B cell (primary cell): ENCODE measurements at regions of chr1 and their contacts with region 1.

Region 1: DNA sequence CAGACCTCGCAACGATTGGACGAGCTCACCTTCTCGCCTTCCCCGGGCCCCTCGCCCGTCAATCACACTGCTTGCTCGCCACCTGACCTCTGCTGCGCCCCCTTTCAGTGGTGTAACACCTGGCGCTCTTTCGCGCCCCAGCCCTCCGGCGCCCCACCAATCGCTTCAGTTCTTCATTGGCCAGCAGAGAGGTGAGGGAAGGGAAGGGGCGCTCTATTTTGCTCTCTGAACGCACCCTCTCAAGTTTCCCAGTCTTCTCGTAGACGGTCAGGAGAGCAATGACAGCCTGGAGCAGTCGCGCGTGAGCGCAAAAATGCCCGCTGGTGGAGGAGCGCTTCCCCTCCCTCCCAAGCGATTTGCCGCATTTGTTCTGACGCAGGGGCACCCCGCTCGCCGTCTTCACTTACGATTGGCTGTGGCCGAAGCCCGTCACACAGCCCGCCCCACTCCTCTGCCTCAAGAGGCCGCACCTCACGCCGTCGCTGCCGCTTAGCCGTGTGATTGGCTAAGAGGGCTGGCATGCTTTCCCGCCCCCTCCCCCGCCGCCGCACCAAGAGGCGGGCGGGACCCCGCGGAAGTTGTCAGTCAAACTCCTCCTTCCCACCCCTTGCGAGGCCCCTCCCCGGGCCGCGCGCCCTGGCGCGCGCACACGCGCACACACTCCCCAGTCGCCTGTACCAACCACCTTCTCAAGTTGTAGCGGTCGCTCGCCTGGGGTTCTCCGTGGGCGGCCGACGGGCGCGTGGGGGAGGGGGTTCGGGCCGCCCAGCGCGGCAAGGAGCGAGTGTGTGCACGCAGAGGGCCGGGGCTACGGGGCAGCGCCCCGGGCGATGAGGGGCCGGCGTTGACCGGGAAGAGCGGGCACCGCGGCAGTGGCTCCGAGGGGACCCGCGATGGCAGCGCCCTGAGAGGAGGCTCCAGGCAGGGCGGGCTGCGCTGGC is at the start of gene PPP2R5A:
- DNase-seq: peak; percentile 100
- ATAC-seq: peak; percentile 85
- H3K4me3 ChIP-seq: peak within 1 kb of the TSS; percentile 75 to 97 (median 92)
- H3K4me3 Mint-ChIP-seq: peak within 1 kb of the TSS; percentile 93
- H3K27ac ChIP-seq: peak within 1 kb of the TSS; percentile 89 to 90
- H3K27ac Mint-ChIP-seq: peak within 1 kb of the TSS; percentile 96
- H3K4me1 ChIP-seq: peaks cover 22 to 28% of the 10 kb centered on the region in 2 donors
- H3K4me1 Mint-ChIP-seq: peaks cover 41% of the 10 kb centered on the region
- H3K27me3 ChIP-seq: no peaks in the 10 kb centered on the region
- H3K27me3 Mint-ChIP-seq: no peaks in the 10 kb centered on the region
- CTCF ChIP-seq: peak; percentile 62
- total RNA-seq, gene PPP2R5A: 41.1 and 43.4 TPM in 2 replicates

Region 2: DNA sequence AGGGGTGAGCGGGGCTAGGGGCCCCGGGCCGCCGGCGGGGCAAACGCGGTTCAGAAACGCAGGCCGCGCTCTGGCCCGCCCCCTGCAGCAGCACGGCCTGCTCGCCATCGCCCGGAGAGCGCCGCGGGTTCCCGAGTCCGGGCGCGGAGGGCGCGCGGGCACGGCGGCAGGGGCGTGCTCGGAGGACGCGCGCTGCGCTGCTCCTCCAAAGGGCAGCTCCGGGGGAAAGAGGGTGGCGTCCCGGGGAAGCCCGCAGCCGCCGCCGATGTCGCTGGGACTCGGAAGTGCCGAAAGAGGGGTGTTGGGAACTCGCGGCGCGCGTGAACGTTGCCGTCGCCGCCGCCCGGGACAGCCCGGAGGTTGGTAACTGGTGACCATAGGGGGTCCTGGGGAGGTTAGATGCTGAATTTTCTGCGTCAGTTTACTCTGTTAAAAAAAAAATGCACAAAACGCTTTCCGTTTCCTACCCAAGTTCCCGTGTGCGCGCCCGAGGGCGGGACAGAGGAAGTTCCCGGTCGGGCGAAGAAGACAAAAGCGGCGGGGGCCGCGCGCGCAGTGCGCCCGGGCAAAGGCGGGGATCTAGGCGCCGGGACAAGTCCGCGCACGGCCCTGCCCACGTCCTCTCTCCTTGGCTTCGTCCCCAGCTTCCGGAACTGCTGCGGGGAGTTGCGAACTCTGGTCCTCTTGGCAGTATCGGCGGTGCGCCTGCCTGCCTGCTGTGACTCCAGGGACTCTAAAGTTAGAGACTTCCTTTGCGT is 1956.1 kb before region 1 on chr1 and contains the start of gene HHAT:
- CTCF ChIA-PET with region 1: no interaction called
- POLR2A ChIA-PET with region 1: no interaction called
- intact Hi-C with region 1: loop called (anchors 2 kb)
- DNase-seq: peak; percentile 75
- ATAC-seq: peak; percentile 70
- H3K4me3 ChIP-seq: peak within 1 kb of the TSS; percentile 52 to 89 (median 87)
- H3K4me3 Mint-ChIP-seq: peak within 1 kb of the TSS; percentile 94
- H3K27ac ChIP-seq: peak within 1 kb of the TSS; percentile 54 to 64
- H3K27ac Mint-ChIP-seq: peak within 1 kb of the TSS; percentile 90
- H3K4me1 ChIP-seq: peaks cover 16 to 25% of the 10 kb centered on the region in 2 donors
- H3K4me1 Mint-ChIP-seq: peaks cover 39% of the 10 kb centered on the region
- H3K27me3 ChIP-seq: peaks cover 0 to 2% (median 0%) of the 10 kb centered on the region in 4 experiments
- H3K27me3 Mint-ChIP-seq: peaks cover 12% of the 10 kb centered on the region
- CTCF ChIP-seq: no peak
- total RNA-seq, gene HHAT: 26.7 and 28.2 TPM in 2 replicates

Region 3: DNA sequence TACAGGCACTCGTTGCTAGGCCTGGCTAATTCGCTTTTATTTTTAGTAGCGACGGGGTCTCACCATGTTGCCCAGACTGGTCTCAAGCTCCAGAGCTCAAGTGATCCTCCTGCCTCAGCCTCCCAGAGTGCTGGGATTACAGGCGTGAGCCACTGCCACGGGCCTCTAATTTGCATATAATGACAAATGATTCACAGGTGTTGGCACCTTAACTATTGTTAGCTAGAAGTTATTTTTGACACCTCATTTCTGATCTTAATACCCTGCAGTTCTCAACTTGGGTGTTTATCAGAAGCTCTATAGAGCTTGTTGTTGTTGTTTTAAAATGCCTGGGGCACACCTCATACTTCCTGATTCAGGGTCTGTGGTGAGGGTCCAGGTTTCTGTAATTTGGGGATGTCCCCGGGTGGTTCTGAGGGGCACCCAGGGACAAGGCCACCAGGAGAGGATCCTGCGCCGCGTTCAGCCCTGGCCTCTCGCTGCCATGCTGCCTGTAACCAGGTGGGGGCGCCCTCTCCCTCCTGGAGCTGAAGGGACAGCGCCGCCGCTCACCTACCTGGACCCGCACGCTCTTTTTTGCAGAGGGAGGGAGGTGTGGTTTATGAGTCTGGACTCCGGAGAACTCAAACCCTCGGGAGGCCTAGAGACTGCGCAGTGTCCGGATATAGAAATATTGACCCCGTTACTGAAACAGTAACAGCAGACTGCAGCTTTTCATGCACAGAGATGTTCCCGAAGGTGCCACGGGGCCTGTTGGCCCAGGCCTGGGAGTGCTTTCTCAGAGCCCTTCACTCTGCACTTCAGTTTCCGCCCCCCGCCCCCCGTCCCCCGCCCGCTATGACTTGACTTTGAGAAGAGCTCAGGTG is 586.6 kb before region 1 on chr1:
- CTCF ChIA-PET with region 1: interaction called, 8 read pairs
- POLR2A ChIA-PET with region 1: no interaction called
- intact Hi-C with region 1: loop called (anchors 5 kb)
- DNase-seq: peak; percentile 76
- ATAC-seq: peak; percentile 45
- H3K4me3 ChIP-seq: peak overlapping the region in 3 of 5 experiments; percentile 21 to 44 (median 34)
- H3K4me3 Mint-ChIP-seq: peak overlapping the region; percentile 76
- H3K27ac ChIP-seq: peak overlapping the region in 1 of 2 donors; percentile 11
- H3K27ac Mint-ChIP-seq: peak overlapping the region; percentile 59
- H3K4me1 ChIP-seq: peaks cover 44 to 52% of the 10 kb centered on the region in 2 donors
- H3K4me1 Mint-ChIP-seq: peaks cover 53% of the 10 kb centered on the region
- H3K27me3 ChIP-seq: peaks cover 0 to 5% (median 0%) of the 10 kb centered on the region in 4 experiments
- H3K27me3 Mint-ChIP-seq: peaks cover 5% of the 10 kb centered on the region
- CTCF ChIP-seq: peak; percentile 97

Region 4: DNA sequence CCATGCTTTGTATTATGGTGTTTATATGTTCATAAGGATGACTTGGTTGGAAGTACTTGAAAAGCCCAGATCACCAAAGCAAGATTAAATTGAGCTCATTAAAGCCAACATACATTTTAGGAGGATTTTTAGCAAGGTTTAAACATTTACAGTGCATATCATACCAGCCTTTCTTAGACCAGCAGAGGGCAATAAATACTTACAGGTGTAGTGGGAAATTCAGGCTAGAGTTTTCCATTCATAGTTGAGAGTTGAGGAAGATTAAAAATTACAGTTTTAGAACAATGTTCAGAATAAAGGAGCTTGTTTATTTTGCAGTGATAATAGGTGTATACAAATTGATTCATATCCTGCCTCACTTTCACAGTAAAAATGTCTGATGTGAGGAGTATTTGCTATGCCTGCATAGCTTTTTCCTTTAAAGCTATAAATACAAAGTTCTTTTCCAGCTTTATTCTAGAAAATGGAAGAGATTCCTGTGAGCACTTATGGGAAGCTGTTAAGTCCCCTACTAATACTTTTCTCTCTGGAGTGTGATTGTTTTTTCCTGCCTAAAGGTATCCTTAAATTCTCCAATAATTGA is 214.2 kb before region 1 on chr1:
- CTCF ChIA-PET with region 1: interaction called, 101 read pairs
- POLR2A ChIA-PET with region 1: no interaction called
- intact Hi-C with region 1: no loop called
- DNase-seq: peak; percentile 64
- ATAC-seq: no peak
- H3K4me3 ChIP-seq: no peak overlapping the region
- H3K4me3 Mint-ChIP-seq: no peak overlapping the region
- H3K27ac ChIP-seq: no peak overlapping the region
- H3K27ac Mint-ChIP-seq: no peak overlapping the region
- H3K4me1 ChIP-seq: no peaks in the 10 kb centered on the region
- H3K4me1 Mint-ChIP-seq: no peaks in the 10 kb centered on the region
- H3K27me3 ChIP-seq: no peaks in the 10 kb centered on the region
- H3K27me3 Mint-ChIP-seq: no peaks in the 10 kb centered on the region
- CTCF ChIP-seq: peak; percentile 63

Region 5: DNA sequence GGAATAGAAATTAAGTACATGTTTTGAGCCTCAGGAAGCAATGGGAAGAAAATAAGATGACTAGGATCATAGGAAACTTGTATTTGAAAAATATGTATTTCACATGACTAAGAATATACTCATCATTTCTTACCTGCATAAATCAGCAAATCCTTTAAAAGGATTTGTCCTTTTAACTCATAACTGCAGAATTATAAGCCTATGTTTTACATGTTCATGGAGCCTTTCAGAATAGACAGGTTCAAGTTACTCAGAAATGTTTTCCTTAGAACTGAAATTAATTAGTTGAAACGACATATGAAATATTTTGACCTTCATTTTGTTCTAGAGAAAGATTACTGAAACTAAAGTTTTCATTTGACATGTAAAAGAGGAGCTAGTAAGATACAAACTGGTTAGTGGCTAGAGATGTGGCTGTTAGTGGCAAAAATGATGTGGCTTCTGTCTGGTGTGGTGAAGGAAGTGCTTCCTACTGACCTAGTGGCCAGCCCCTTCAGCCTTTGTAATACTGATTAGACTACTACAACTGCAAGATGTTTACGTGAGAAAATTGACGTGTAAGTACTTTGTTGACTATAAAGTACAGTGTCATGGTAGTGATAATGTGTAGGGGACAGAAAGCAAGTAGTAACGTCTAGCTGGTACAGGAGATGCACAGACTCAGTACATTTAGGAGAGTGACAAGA is 74.9 kb after region 1 on chr1:
- CTCF ChIA-PET with region 1: no interaction called
- POLR2A ChIA-PET with region 1: no interaction called
- intact Hi-C with region 1: no loop called
- DNase-seq: no peak
- ATAC-seq: no peak
- H3K4me3 ChIP-seq: no peak overlapping the region
- H3K4me3 Mint-ChIP-seq: no peak overlapping the region
- H3K27ac ChIP-seq: no peak overlapping the region
- H3K27ac Mint-ChIP-seq: peak overlapping the region; percentile 21
- H3K4me1 ChIP-seq: no peaks in the 10 kb centered on the region
- H3K4me1 Mint-ChIP-seq: no peaks in the 10 kb centered on the region
- H3K27me3 ChIP-seq: no peaks in the 10 kb centered on the region
- H3K27me3 Mint-ChIP-seq: no peaks in the 10 kb centered on the region
- CTCF ChIP-seq: no peak

Region 6: GRCh38 chr1:212432706-212433576 is 147.9 kb after region 1 on chr1 and contains the start of gene NENF:
- CTCF ChIA-PET with region 1: no interaction called
- POLR2A ChIA-PET with region 1: no interaction called
- intact Hi-C with region 1: loop called (anchors 5 kb)
- DNase-seq: peak; percentile 81
- ATAC-seq: peak; percentile 99
- H3K4me3 ChIP-seq: peak within 1 kb of the TSS; percentile 26 to 82 (median 58)
- H3K4me3 Mint-ChIP-seq: peak within 1 kb of the TSS; percentile 82
- H3K27ac ChIP-seq: peak within 1 kb of the TSS in 1 of 2 donors; percentile 65
- H3K27ac Mint-ChIP-seq: peak within 1 kb of the TSS; percentile 33
- H3K4me1 ChIP-seq: peaks cover 12 to 15% of the 10 kb centered on the region in 2 donors
- H3K4me1 Mint-ChIP-seq: peaks cover 25% of the 10 kb centered on the region
- H3K27me3 ChIP-seq: no peaks in the 10 kb centered on the region
- H3K27me3 Mint-ChIP-seq: no peaks in the 10 kb centered on the region
- CTCF ChIP-seq: no peak
- total RNA-seq, gene NENF: 20.3 and 22.7 TPM in 2 replicates

Region 7: GRCh38 chr1:212857992-212858460 is 573.0 kb after region 1 on chr1 and contains the start of gene FLVCR1:
- CTCF ChIA-PET with region 1: interaction called, 3 read pairs
- POLR2A ChIA-PET with region 1: no interaction called
- intact Hi-C with region 1: loop called (anchors 2 kb)
- DNase-seq: peak; percentile 93
- ATAC-seq: peak; percentile 98
- H3K4me3 ChIP-seq: peak within 1 kb of the TSS; percentile 71 to 96 (median 82)
- H3K4me3 Mint-ChIP-seq: peak within 1 kb of the TSS; percentile 95
- H3K27ac ChIP-seq: peak within 1 kb of the TSS; percentile 51 to 85
- H3K27ac Mint-ChIP-seq: peak within 1 kb of the TSS; percentile 96
- H3K4me1 ChIP-seq: peaks cover 25 to 32% of the 10 kb centered on the region in 2 donors
- H3K4me1 Mint-ChIP-seq: peaks cover 22% of the 10 kb centered on the region
- H3K27me3 ChIP-seq: no peaks in the 10 kb centered on the region
- H3K27me3 Mint-ChIP-seq: no peaks in the 10 kb centered on the region
- CTCF ChIP-seq: no peak
- total RNA-seq, gene FLVCR1: 19.2 and 19.7 TPM in 2 replicates